ENCODE measurements at regions of chr11 and their contacts with region 1.

Region 1: DNA sequence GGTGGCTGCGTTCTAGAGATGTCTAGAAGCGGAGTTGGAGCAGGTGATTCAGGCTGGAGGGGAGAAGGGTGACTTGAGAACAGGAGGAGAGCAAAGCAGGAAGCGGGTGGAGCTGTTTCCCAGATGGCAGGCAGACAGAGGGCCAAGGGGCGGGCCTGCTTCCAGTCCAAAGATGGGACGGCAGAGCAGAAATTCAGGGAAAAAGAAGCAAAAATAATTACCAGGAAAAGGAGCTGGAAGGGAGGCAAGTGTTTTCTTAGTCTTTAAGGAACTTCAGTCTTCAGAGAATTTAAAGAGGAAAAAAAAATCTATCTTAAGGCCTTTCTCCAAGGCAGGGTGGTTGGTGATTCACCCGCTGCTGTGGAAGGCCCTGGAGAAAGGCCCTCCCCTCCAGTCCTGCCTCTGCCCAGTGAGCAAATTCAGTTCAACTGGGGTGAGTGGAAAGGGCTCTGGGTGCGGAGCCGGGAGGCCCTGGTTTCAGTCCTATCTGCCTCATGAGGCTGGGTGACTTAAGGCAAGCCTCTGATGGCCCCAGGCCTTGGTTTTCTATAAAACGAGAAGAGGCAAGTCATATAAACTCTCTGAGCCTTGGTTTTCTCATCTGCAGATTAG is 4.5 kb upstream of the CREB3L1 start:
- DNase-seq: no peak
- H3K4me3 ChIP-seq: no peak overlapping the region
- H3K27me3 ChIP-seq: no peaks in the 10 kb centered on the region
- CTCF ChIP-seq: no peak

Region 2: DNA sequence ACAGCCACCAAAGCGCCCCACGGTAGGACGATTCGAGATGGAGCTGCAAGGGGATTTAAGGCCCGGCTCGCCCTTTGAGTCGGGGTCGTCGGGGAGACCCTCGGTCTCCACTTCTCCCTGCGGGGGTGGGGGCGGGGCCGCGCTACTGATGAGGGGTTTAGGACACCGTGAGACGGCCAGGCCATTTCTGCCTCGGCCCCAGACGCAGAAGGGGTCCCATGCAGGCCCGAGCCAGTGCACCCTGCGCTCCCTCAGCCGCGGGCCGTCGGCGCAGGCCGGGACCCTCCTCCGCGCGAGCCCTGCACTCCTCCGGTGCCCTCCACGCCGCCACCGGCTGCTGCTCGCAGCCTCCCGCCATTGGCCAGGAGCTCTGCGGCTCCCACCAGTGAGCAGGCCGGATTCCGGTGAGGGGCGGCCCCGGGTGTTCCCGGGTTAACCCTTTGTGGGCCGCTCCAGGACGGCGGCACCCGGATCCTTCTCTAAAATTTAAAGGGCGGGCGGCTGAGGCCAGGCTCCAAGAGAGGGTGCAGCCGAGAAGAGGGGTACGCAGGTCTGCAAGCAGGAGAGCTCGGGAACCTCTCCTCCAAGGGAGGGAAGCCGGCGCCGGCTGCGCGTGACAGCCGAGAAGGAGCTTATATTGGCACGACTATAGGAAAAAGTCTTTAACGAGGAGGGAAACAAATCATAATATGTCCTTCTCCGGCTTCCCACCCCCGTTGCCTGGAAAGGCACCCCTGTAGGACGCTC is 22.6 kb after region 1 on chr11:
- CTCF ChIA-PET with region 1: interaction called, 71 read pairs
- POLR2A ChIA-PET with region 1: interaction called, 7 read pairs
- DNase-seq: no peak
- H3K4me3 ChIP-seq: peak overlapping the region; percentile 51
- H3K27me3 ChIP-seq: no peaks in the 10 kb centered on the region
- CTCF ChIP-seq: no peak

Region 3: DNA sequence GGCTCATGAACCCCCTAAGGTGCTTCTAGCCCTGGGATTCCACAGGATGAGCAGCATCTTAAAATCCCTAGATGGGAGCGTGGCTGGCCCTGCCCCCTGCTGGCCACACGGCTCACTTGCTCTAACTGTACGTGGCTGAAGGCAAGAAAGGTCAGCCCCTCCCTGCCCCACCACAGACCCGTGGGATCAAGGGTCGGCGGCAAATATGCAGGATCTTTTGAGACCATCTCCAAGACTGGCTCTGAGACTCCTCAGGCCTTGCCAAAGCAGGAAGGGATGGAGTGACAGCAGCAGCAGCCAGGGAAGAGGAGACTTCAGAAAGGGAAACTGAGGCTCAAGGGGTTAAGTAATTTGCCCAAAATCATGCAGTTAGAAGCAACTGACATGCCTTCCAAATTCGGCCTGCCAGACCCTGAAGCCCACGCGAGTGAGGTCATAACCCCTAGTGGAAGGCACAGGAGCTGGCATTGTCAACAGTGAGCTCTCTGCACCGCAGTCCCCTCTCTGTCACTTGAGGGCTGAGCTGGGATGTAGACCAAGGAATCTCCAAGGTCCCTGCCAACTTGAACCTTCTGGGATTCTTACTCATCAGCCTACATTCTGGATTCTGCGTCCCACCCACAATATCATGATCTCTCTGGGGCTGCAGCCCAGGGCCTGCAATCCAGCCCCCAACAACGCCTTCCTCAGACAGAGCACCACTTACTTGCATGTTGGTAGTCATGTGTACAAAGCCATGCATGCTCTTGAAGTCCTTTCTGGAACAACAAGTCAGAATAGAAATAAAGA is 35.9 kb after region 1 on chr11:
- CTCF ChIA-PET with region 1: interaction called, 121 read pairs
- POLR2A ChIA-PET with region 1: no interaction called
- DNase-seq: no peak
- H3K4me3 ChIP-seq: no peak overlapping the region
- H3K27me3 ChIP-seq: no peaks in the 10 kb centered on the region
- CTCF ChIP-seq: peak; percentile 91

Region 4: DNA sequence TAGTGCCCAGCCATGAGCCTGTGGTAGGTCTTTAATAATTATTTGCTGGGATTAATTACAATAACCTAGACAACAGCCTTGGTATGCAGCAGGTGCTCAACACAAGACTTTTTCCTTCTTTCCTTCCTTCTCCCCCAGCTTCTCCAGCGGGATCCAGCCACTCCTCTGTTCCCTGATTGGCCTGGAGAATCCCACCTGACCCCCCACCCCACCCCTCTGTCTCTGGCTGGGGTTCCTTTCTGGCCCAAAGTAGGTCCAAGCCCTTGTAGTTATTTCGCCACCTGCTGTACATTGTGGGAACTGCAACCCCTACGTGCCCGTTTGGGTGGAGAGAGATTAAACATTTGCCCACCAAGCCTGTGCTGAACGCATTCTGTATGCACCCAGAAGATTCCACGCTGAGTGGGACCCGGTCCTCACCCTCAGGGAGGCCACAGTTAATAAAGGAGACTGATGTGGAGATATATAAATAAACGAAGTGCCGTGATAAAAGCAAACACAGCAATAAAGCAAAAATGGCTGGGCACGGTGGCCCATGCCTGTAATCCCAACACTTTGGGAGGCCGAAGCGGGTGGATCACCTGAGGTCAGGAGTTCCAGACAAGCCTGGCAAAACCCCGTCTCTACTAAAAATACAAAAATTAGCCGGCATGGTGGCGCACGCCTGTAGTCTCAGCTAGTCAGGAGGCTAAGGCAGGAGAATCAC is 42.3 kb after region 1 on chr11:
- CTCF ChIA-PET with region 1: interaction called, 121 read pairs
- POLR2A ChIA-PET with region 1: no interaction called
- DNase-seq: no peak
- H3K4me3 ChIP-seq: no peak overlapping the region
- H3K27me3 ChIP-seq: no peaks in the 10 kb centered on the region
- CTCF ChIP-seq: peak; percentile 88

Region 5: DNA sequence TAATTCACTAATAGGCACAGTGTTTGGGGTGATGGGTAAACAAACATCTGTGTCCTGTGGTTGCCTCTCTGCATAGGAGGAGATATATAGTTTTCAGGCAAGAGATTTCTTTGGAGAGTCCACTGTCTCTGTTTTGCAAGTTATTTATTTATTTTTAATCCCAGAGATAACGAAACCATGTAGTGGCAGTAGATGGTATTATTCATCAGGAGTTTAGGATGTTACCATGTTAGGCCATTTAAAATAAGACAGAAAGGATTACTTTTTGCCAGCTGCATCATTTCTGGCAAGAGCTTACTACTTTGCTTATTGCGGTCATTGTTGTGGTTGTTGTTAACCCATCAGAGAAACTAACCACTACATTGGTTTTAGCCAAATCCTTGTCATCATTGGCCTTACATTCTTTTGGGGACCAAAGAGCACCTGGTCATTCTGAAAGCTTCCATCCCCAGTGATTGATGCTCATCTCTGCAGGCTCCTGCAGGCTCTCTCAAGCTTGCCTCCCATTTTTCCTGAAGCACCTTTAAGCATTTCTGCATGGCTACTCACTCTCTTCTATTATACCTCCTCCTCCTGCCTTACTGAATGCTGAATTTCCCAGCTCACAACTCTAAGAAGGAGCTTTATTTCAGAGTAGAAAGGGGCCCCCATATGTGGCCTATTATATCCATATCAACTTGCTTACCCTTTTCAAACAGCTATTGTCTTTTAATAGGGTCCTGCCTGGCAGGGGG is 748.0 kb after region 1 on chr11:
- CTCF ChIA-PET with region 1: no interaction called
- POLR2A ChIA-PET with region 1: no interaction called
- DNase-seq: no peak
- H3K4me3 ChIP-seq: no peak overlapping the region
- H3K27me3 ChIP-seq: no peaks in the 10 kb centered on the region
- CTCF ChIP-seq: no peak